Activated CD8-positive, alpha-beta T cell treated with anti-CD3 and anti-CD28 coated beads for 36 hours (primary cell): ENCODE measurements at regions of chr2 and their contacts with region 1.

Region 1: GRCh38 chr2:181178823-181179412 is 198.5 kb downstream of the UBE2E3 start:
- DNase-seq: peak; percentile 68
- ATAC-seq: peak; percentile 77
- H3K4me3 Mint-ChIP-seq: no peak overlapping the region
- H3K27ac Mint-ChIP-seq: peak overlapping the region; percentile 71
- H3K4me1 Mint-ChIP-seq: peaks cover 52% of the 10 kb centered on the region
- H3K27me3 Mint-ChIP-seq: no peaks in the 10 kb centered on the region
- CTCF ChIP-seq: peak; percentile 61

Region 2: GRCh38 chr2:181123798-181124231 is 55.1 kb before region 1 on chr2:
- CTCF ChIA-PET with region 1: no interaction called
- POLR2A ChIA-PET with region 1: no interaction called
- intact Hi-C with region 1: loop called (anchors 5 kb)
- DNase-seq: peak; percentile 78
- ATAC-seq: peak; percentile 91
- H3K4me3 Mint-ChIP-seq: peak overlapping the region; percentile 61
- H3K27ac Mint-ChIP-seq: peak overlapping the region; percentile 91
- H3K4me1 Mint-ChIP-seq: peaks cover 53% of the 10 kb centered on the region
- H3K27me3 Mint-ChIP-seq: no peaks in the 10 kb centered on the region
- CTCF ChIP-seq: no peak

Region 3: GRCh38 chr2:181165199-181165868 is 13.6 kb before region 1 on chr2:
- CTCF ChIA-PET with region 1: interaction called, 10 read pairs
- POLR2A ChIA-PET with region 1: interaction called, 4 read pairs
- intact Hi-C with region 1: no loop called
- DNase-seq: peak; percentile 56
- ATAC-seq: peak; percentile 87
- H3K4me3 Mint-ChIP-seq: peak overlapping the region; percentile 44
- H3K27ac Mint-ChIP-seq: peak overlapping the region; percentile 98
- H3K4me1 Mint-ChIP-seq: peaks cover 56% of the 10 kb centered on the region
- H3K27me3 Mint-ChIP-seq: no peaks in the 10 kb centered on the region
- CTCF ChIP-seq: no peak